CD8-positive, alpha-beta T cell (primary cell): ENCODE measurements at regions of chr6 and their contacts with region 1.

Region 1: GRCh38 chr6:156776840-156777576 is at the start of gene ARID1B:
- DNase-seq: peak; percentile 55 to 92 (median 81)
- ATAC-seq: peak; percentile 57
- H3K4me3 ChIP-seq: peak within 1 kb of the TSS; percentile 47 to 76
- H3K4me3 Mint-ChIP-seq: peak within 1 kb of the TSS; percentile 90
- H3K27ac ChIP-seq: peak within 1 kb of the TSS; percentile 76 to 79
- H3K27ac Mint-ChIP-seq: peak within 1 kb of the TSS; percentile 96
- H3K4me1 ChIP-seq: peaks cover 5% of the 10 kb centered on the region
- H3K4me1 Mint-ChIP-seq: peaks cover 30% of the 10 kb centered on the region
- H3K27me3 ChIP-seq: no peaks in the 10 kb centered on the region
- H3K27me3 Mint-ChIP-seq: no peaks in the 10 kb centered on the region
- CTCF ChIP-seq: no peak
- total RNA-seq, gene ARID1B: 98.4 to 111 TPM

Region 2: DNA sequence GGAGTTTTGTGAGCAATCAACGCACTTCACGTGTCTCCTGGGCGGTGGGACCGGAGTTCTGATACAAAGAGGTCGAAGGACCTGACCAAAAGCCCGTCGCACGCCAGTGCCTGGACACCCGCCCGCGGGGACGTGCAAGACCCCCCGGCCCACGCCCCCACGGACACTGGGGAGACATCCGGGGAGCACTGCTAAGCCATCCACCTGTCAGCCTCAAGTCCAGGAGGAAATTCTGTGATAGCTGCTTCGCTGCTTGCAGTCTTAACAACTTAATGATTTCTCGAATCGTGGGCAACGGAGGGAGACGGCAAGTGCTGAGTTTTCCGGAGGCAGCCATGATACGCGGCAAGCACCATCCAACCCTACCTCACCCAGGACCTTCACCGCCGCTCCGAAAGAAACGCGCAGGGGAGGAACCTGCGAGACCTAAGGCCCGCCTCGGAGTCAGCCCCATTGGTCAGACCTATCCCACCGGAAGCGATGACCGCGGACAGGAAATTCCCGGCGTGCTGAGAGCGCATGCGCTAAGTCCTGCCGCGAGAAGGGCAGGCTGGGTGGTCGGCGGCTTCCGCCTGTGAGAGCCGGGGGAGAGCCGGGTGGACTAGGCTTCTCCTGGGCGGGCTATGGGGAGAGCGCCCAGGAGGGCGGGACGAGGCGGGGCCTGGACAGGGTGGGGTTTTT is 1462.8 kb before region 1 on chr6 and contains the start of gene TFB1M:
- CTCF ChIA-PET with region 1: no interaction called
- POLR2A ChIA-PET with region 1: no interaction called
- intact Hi-C with region 1: loop called (anchors 2 to 5 kb)
- DNase-seq: peak; percentile 91 to 99 (median 97)
- ATAC-seq: peak; percentile 93
- H3K4me3 ChIP-seq: peak within 1 kb of the TSS; percentile 92 to 97
- H3K4me3 Mint-ChIP-seq: peak within 1 kb of the TSS; percentile 98
- H3K27ac ChIP-seq: peak within 1 kb of the TSS; percentile 83 to 87
- H3K27ac Mint-ChIP-seq: peak within 1 kb of the TSS; percentile 97
- H3K4me1 ChIP-seq: peaks cover 7% of the 10 kb centered on the region
- H3K4me1 Mint-ChIP-seq: peaks cover 35% of the 10 kb centered on the region
- H3K27me3 ChIP-seq: no peaks in the 10 kb centered on the region
- H3K27me3 Mint-ChIP-seq: no peaks in the 10 kb centered on the region
- CTCF ChIP-seq: no peak
- total RNA-seq, gene TFB1M: 6.3 to 7.9 TPM

Region 3: GRCh38 chr6:156359912-156360311 is 417.1 kb before region 1 on chr6:
- CTCF ChIA-PET with region 1: no interaction called
- POLR2A ChIA-PET with region 1: no interaction called
- intact Hi-C with region 1: no loop called
- DNase-seq: no peak
- ATAC-seq: no peak
- H3K4me3 ChIP-seq: no peak overlapping the region
- H3K4me3 Mint-ChIP-seq: no peak overlapping the region
- H3K27ac ChIP-seq: no peak overlapping the region
- H3K27ac Mint-ChIP-seq: no peak overlapping the region
- H3K4me1 ChIP-seq: no peaks in the 10 kb centered on the region
- H3K4me1 Mint-ChIP-seq: no peaks in the 10 kb centered on the region
- H3K27me3 ChIP-seq: no peaks in the 10 kb centered on the region
- H3K27me3 Mint-ChIP-seq: peaks cover 4% of the 10 kb centered on the region
- CTCF ChIP-seq: no peak

Region 4: GRCh38 chr6:156686995-156687788 is 89.8 kb before region 1 on chr6:
- CTCF ChIA-PET with region 1: interaction called, 8 read pairs
- POLR2A ChIA-PET with region 1: interaction called, 75 read pairs
- intact Hi-C with region 1: loop called (anchors 1 kb)
- DNase-seq: peak; percentile 60 to 92 (median 73)
- ATAC-seq: peak; percentile 83
- H3K4me3 ChIP-seq: peak overlapping the region; percentile 92 to 93
- H3K4me3 Mint-ChIP-seq: peak overlapping the region; percentile 89
- H3K27ac ChIP-seq: peak overlapping the region; percentile 89 to 95
- H3K27ac Mint-ChIP-seq: peak overlapping the region; percentile 97
- H3K4me1 ChIP-seq: peaks cover 8% of the 10 kb centered on the region
- H3K4me1 Mint-ChIP-seq: peaks cover 16% of the 10 kb centered on the region
- H3K27me3 ChIP-seq: no peaks in the 10 kb centered on the region
- H3K27me3 Mint-ChIP-seq: peaks cover 6% of the 10 kb centered on the region
- CTCF ChIP-seq: no peak

Region 5: GRCh38 chr6:156953479-156954146 is 176.6 kb after region 1 on chr6:
- CTCF ChIA-PET with region 1: no interaction called
- POLR2A ChIA-PET with region 1: interaction called, 3 read pairs
- intact Hi-C with region 1: loop called (anchors 2 to 5 kb)
- DNase-seq: peak in 5 of 9 experiments; percentile 33 to 87 (median 67)
- ATAC-seq: peak; percentile 93
- H3K4me3 ChIP-seq: no peak overlapping the region
- H3K4me3 Mint-ChIP-seq: no peak overlapping the region
- H3K27ac ChIP-seq: no peak overlapping the region
- H3K27ac Mint-ChIP-seq: no peak overlapping the region
- H3K4me1 ChIP-seq: peaks cover 30% of the 10 kb centered on the region
- H3K4me1 Mint-ChIP-seq: peaks cover 73% of the 10 kb centered on the region
- H3K27me3 ChIP-seq: no peaks in the 10 kb centered on the region
- H3K27me3 Mint-ChIP-seq: no peaks in the 10 kb centered on the region
- CTCF ChIP-seq: peak; percentile 45

Region 6: DNA sequence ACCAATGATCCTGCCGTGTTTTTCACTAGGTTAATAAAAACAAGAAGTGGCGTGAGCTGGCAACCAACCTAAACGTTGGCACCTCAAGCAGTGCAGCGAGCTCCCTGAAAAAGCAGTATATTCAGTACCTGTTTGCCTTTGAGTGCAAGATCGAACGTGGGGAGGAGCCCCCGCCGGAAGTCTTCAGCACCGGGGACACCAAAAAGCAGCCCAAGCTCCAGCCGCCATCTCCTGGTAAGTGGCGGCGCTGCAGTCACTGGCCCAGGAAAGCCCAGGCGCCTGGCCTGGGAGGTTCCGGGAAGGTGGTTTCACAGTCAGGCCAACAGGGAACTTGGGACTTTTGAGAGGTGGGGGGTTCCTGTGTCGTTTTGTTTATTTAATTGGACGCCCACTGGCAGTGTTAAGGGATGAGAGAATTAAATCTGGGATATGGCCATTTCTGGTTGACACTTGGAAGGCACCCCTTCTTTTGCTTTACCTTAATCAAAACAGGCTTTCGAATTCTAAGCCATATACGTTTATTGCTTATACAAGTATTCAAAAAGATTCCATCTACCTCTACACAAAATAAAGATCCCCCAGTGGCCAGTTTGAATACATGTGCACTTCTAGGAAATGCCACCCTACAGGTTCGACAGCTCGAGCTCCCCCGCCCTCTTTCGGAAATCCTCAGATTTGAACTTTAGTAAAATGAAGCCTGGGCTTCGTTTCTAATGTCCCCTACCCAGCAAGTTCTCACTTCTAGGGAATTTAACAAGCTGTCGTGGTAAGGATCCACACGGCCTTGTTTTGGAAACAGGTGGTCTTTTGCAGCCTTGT is 407.4 kb after region 1 on chr6:
- CTCF ChIA-PET with region 1: no interaction called
- POLR2A ChIA-PET with region 1: no interaction called
- intact Hi-C with region 1: loop called (anchors 5 to 10 kb)
- DNase-seq: peak; percentile 17 to 71 (median 64)
- ATAC-seq: peak; percentile 89
- H3K4me3 ChIP-seq: no peak overlapping the region
- H3K4me3 Mint-ChIP-seq: no peak overlapping the region
- H3K27ac ChIP-seq: no peak overlapping the region
- H3K27ac Mint-ChIP-seq: peak overlapping the region; percentile 10
- H3K4me1 ChIP-seq: no peaks in the 10 kb centered on the region
- H3K4me1 Mint-ChIP-seq: peaks cover 17% of the 10 kb centered on the region
- H3K27me3 ChIP-seq: no peaks in the 10 kb centered on the region
- H3K27me3 Mint-ChIP-seq: no peaks in the 10 kb centered on the region
- CTCF ChIP-seq: peak; percentile 69

Region 7: DNA sequence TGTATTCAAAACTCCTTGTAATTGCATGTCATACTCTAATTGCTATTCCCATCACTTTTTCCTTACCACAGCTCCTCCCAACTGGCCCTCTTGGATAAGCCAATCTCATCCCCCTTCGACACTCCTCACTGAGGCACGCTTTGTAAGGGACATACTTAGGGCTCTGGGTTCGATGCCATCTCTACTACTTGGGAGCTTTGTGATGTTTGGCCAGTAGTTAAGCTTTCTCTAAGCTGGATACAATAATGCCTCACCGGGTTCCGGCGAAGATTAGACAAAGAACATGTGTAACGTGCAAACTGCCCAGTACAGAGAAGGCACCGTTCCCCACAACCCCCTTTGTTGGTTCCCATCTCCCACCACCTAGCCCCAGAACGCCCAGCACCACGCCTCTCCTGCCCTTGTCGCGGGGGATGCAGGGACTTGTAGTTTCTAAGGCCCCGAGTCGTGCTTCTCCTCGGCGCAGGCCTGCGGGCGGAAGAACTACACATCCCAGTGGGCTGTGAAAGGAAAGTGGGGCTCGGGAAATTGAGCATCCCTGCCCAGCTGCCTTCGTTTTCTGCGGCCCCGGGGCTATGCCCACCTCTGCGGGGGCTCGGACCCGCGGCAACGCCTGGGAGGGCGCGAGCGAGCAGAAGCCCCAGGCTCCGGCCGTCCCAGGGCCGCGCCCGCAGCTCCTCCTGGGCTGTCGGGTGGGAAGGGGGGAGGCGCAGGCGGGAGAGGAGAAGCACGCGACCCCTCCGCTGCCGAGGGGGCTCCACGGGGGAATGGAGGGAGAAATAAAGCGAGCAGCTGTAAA is 602.8 kb after region 1 on chr6:
- CTCF ChIA-PET with region 1: no interaction called
- POLR2A ChIA-PET with region 1: no interaction called
- intact Hi-C with region 1: loop called in 1 of 2 experiments (anchors 10 kb)
- DNase-seq: peak; percentile 76 to 92 (median 89)
- ATAC-seq: peak; percentile 79
- H3K4me3 ChIP-seq: peak overlapping the region; percentile 92 to 96
- H3K4me3 Mint-ChIP-seq: peak overlapping the region; percentile 83
- H3K27ac ChIP-seq: peak overlapping the region; percentile 68 to 80
- H3K27ac Mint-ChIP-seq: peak overlapping the region; percentile 64
- H3K4me1 ChIP-seq: peaks cover 10% of the 10 kb centered on the region
- H3K4me1 Mint-ChIP-seq: peaks cover 20% of the 10 kb centered on the region
- H3K27me3 ChIP-seq: no peaks in the 10 kb centered on the region
- H3K27me3 Mint-ChIP-seq: no peaks in the 10 kb centered on the region
- CTCF ChIP-seq: no peak

Region 8: GRCh38 chr6:158026054-158026900 is 1249.3 kb after region 1 on chr6:
- CTCF ChIA-PET with region 1: no interaction called
- POLR2A ChIA-PET with region 1: no interaction called
- intact Hi-C with region 1: loop called in 1 of 2 experiments (anchors 5 kb)
- DNase-seq: peak; percentile 64 to 92 (median 80)
- ATAC-seq: peak; percentile 77
- H3K4me3 ChIP-seq: peak overlapping the region; percentile 24 to 42
- H3K4me3 Mint-ChIP-seq: peak overlapping the region; percentile 81
- H3K27ac ChIP-seq: peak overlapping the region; percentile 65 to 91
- H3K27ac Mint-ChIP-seq: peak overlapping the region; percentile 97
- H3K4me1 ChIP-seq: peaks cover 27% of the 10 kb centered on the region
- H3K4me1 Mint-ChIP-seq: peaks cover 36% of the 10 kb centered on the region
- H3K27me3 ChIP-seq: no peaks in the 10 kb centered on the region
- H3K27me3 Mint-ChIP-seq: no peaks in the 10 kb centered on the region
- CTCF ChIP-seq: peak; percentile 75